ENCODE measurements at regions of chr11 and their contacts with region 1.

Region 1: DNA sequence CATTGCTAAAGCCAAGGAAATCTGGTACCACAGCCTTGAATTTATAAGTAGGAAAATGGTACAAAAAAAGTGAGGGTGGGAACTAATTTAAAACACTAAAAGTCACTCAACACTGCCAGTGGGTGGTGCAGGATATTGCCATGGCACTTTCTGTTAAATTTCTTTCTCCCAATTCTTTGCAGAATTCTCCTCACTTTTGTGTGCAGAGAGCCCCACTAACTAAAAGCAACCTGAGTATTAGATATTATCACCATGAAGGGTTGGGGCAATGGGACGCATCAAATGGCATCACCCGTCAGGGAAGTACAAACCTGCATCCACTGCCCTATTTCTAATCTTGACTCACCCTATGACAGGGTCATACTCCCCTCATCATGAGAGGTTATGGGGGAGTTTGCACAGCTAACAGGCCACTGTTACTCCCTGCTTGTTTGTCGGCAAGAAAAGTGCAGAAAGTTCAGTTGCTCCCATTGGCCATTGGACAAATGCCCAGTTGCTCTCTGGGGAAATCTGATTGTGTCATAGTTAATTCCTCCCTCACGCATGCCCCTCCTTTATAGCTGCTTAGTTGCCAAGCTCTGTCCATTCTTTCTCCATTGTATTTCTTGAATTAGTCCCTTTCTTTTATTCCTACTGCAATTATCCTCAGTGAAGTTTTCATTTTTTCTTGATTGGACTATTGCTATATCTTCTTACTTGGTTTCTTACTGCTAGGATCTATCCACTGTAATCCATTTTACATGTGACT is 93.8 kb upstream of the BLID start:
- DNase-seq: peak; percentile 76 to 78
- H3K4me3 ChIP-seq: no peak overlapping the region
- H3K27ac ChIP-seq: peak overlapping the region; percentile 81 to 93 (median 88)
- H3K4me1 ChIP-seq: peaks cover 44 to 61% of the 10 kb centered on the region in 2 donors
- H3K27me3 ChIP-seq: no peaks in the 10 kb centered on the region
- CTCF ChIP-seq: no peak
- POLR2A ChIP-seq: no peak

Region 2: GRCh38 chr11:122101625-122102291 is 108.0 kb before region 1 on chr11:
- intact Hi-C with region 1: loop called (anchors 5 kb)
- DNase-seq: peak; percentile 79 to 81
- H3K4me3 ChIP-seq: peak overlapping the region in 2 of 3 donors; percentile 47
- H3K27ac ChIP-seq: peak overlapping the region; percentile 93 to 94 (median 94)
- H3K4me1 ChIP-seq: peaks cover 0 to 5% of the 10 kb centered on the region in 2 donors
- H3K27me3 ChIP-seq: no peaks in the 10 kb centered on the region
- CTCF ChIP-seq: peak; percentile 15 to 83 (median 68)
- POLR2A ChIP-seq: peak in 1 of 2 donors; percentile 70

Region 3: DNA sequence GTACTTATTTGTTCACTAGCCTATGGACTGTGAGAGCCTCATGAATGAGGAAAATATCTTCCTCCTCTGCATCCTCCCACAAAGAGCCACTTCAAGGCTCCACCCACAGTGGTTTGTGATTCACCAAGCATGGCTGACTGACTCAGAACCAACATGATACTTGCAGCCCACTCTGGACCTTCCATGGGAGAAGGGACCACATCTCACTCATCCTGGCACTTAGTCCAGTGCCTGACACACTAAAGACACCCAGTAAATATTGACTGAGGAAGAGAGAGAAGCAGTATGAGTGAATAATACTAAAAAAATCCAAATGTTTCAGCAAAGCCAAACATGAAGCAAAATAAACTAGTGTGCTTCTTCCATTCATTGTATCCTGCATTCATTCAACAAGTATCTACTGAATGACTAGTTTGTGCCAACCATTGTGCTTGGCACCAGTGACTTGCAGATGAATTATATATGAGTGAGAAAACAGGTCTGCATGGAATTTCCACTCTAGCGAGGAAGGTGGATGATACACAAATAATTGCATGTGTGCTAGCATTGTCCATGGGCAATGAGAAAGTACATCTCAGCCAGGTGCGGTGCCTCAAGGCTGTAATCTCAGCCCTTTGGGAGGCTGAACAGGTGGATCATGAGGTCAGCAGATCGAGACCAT is 38.8 kb before region 1 on chr11:
- intact Hi-C with region 1: no loop called
- DNase-seq: peak; percentile 71 to 76
- H3K4me3 ChIP-seq: no peak overlapping the region
- H3K27ac ChIP-seq: peak overlapping the region; percentile 63 to 84 (median 68)
- H3K4me1 ChIP-seq: peaks cover 35 to 49% of the 10 kb centered on the region in 2 donors
- H3K27me3 ChIP-seq: no peaks in the 10 kb centered on the region
- CTCF ChIP-seq: no peak
- POLR2A ChIP-seq: no peak

Region 4: DNA sequence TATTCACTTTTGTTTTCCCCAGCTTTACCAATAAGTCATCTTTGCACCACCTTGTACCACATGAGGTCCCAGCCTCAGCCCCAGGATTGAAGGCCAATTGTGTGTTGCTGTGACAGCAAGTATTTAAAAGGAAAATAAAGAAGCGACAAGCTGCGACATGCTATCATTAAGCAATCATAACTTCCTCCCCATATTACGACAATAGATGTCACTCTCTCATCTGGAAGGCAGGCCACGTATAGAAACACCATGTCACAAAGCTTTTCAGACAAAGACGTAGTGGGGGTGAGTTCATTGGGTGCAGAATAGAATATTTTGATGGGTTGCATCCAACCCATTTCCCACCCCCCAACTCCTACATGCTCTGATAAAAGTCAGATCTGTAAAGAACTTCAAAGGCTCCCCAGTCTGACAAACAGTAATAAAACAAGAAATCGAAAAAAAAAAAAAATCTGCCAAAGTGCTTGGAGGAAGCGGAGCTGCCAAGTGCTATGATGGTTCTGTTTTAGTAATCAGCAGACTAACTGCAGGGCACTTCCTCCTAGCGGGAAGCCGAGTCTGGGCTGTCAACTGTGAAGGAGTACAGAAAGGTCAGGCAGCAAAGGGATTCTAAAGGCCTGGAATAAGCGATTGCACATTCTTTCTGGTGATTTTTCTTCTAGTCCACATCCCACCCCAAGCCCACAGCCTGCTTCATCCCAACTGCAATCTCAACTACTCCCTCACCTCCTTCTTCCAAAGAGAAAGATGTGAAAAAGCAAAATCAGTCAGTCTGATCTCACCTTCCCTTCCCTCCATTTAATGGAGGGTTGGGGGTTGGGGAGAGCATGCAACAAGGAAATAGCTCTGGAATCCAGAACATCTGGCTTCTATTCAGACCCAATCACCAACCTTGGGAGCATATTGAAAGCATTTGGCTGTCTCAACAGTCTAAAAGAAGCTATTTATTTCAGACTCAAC is 314.3 kb after region 1 on chr11:
- intact Hi-C with region 1: no loop called
- DNase-seq: peak; percentile 45 to 64
- H3K4me3 ChIP-seq: no peak overlapping the region
- H3K27ac ChIP-seq: no peak overlapping the region
- H3K4me1 ChIP-seq: peaks cover 0 to 5% of the 10 kb centered on the region in 2 donors
- H3K27me3 ChIP-seq: no peaks in the 10 kb centered on the region
- CTCF ChIP-seq: no peak
- POLR2A ChIP-seq: no peak

Region 5: DNA sequence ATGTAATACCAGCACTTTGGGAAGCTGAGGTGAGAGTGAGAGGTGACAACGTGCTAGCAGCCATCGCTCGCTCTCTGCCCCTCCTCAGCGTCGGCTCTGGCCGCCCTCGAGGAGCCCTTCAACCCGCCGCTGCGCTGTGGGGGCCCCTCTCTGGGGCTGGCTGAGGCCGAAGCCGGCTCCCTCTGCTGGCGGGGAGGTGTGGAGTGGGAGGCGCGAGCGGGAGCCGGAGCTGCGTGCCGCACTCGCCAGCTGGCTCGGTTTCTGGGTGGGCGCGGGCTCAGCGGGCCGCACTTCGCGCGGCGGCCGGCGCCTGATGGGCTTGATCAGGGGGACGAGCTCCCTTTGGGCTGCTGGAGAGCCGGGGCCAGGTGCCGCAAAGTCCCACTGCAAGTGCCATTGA is 346.8 kb after region 1 on chr11:
- intact Hi-C with region 1: no loop called
- DNase-seq: peak; percentile 24 to 57
- H3K4me3 ChIP-seq: no peak overlapping the region
- H3K27ac ChIP-seq: no peak overlapping the region
- H3K4me1 ChIP-seq: no peaks in the 10 kb centered on the region
- H3K27me3 ChIP-seq: no peaks in the 10 kb centered on the region
- CTCF ChIP-seq: peak in 2 of 6 experiments; percentile 36 to 41
- POLR2A ChIP-seq: no peak